ENCODE measurements at regions of chr2 and their contacts with region 1.

Region 1: GRCh38 chr2:20291106-20291564 is 59.5 kb downstream of the PUM2 start:
- DNase-seq: peak; percentile 88
- H3K4me3 Mint-ChIP-seq: no peak overlapping the region
- H3K27ac Mint-ChIP-seq: peak overlapping the region; percentile 9
- H3K4me1 Mint-ChIP-seq: peaks cover 6% of the 10 kb centered on the region
- H3K27me3 Mint-ChIP-seq: no peaks in the 10 kb centered on the region
- CTCF ChIP-seq: peak; percentile 64

Region 2: GRCh38 chr2:19955544-19956422 is 335.4 kb before region 1 on chr2:
- CTCF ChIA-PET with region 1: interaction called, 3 read pairs
- POLR2A ChIA-PET with region 1: no interaction called
- intact Hi-C with region 1: loop called (anchors 1 kb)
- DNase-seq: peak; percentile 72
- H3K4me3 Mint-ChIP-seq: no peak overlapping the region
- H3K27ac Mint-ChIP-seq: no peak overlapping the region
- H3K4me1 Mint-ChIP-seq: no peaks in the 10 kb centered on the region
- H3K27me3 Mint-ChIP-seq: no peaks in the 10 kb centered on the region
- CTCF ChIP-seq: peak; percentile 82

Region 3: GRCh38 chr2:20135631-20136050 is 155.5 kb before region 1 on chr2:
- CTCF ChIA-PET with region 1: interaction called, 3 read pairs
- POLR2A ChIA-PET with region 1: no interaction called
- intact Hi-C with region 1: loop called (anchors 1 kb)
- DNase-seq: peak; percentile 68
- H3K4me3 Mint-ChIP-seq: no peak overlapping the region
- H3K27ac Mint-ChIP-seq: no peak overlapping the region
- H3K4me1 Mint-ChIP-seq: peaks cover 21% of the 10 kb centered on the region
- H3K27me3 Mint-ChIP-seq: no peaks in the 10 kb centered on the region
- CTCF ChIP-seq: peak; percentile 72

Region 4: DNA sequence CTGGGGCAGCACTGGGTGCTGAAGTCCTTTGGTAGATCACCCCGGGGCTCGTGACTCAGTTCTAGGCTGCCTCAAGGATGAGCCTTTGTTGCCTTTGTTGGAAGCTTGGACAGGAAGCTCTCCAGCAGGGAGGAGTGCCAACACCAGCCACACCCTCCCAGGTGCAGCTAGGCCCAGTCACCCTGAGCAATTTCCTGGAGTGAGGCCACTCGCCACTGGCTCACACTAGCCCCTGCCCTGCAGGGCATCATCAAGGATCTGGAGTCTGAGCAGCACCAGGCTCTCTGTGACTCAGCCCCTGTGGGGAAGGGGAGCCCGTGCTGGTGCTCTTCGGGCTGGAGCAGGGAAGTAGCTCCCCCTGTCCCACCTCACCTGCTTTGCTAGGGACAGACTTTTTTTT is 59.5 kb before region 1 on chr2:
- CTCF ChIA-PET with region 1: interaction called, 26 read pairs
- POLR2A ChIA-PET with region 1: interaction called, 11 read pairs
- intact Hi-C with region 1: loop called (anchors 2 kb)
- DNase-seq: peak; percentile 99
- H3K4me3 Mint-ChIP-seq: peak overlapping the region; percentile 43
- H3K27ac Mint-ChIP-seq: peak overlapping the region; percentile 81
- H3K4me1 Mint-ChIP-seq: peaks cover 46% of the 10 kb centered on the region
- H3K27me3 Mint-ChIP-seq: no peaks in the 10 kb centered on the region
- CTCF ChIP-seq: no peak

Region 5: GRCh38 chr2:20304411-20304810 is 13.3 kb after region 1 on chr2:
- CTCF ChIA-PET with region 1: interaction called, 23 read pairs
- POLR2A ChIA-PET with region 1: interaction called, 3 read pairs
- intact Hi-C with region 1: no loop called
- DNase-seq: no peak
- H3K4me3 Mint-ChIP-seq: no peak overlapping the region
- H3K27ac Mint-ChIP-seq: no peak overlapping the region
- H3K4me1 Mint-ChIP-seq: peaks cover 12% of the 10 kb centered on the region
- H3K27me3 Mint-ChIP-seq: no peaks in the 10 kb centered on the region
- CTCF ChIP-seq: no peak

Measured in MCF 10A (cell line).